HAP-1 (cell line): ENCODE measurements at regions of chr10 and their contacts with region 1.

Region 1: GRCh38 chr10:60208676-60209269 is 180.9 kb downstream of the ANK3 start:
- DNase-seq: peak in 1 of 2 experiments; percentile 54
- H3K4me3 ChIP-seq: no peak overlapping the region
- H3K4me1 ChIP-seq: no peaks in the 10 kb centered on the region
- H3K27me3 ChIP-seq: peaks cover 24% of the 10 kb centered on the region

Region 2: GRCh38 chr10:59970396-59971368 is 238.1 kb before region 1 on chr10:
- in situ Hi-C with region 1: no loop called
- DNase-seq: no peak
- H3K4me3 ChIP-seq: no peak overlapping the region
- H3K4me1 ChIP-seq: no peaks in the 10 kb centered on the region
- H3K27me3 ChIP-seq: no peaks in the 10 kb centered on the region

Region 3: GRCh38 chr10:60099998-60100747 is 108.6 kb before region 1 on chr10:
- in situ Hi-C with region 1: loop called (anchors 5 kb)
- DNase-seq: peak; percentile 42 to 64
- H3K4me3 ChIP-seq: no peak overlapping the region
- H3K4me1 ChIP-seq: peaks cover 22% of the 10 kb centered on the region
- H3K27me3 ChIP-seq: no peaks in the 10 kb centered on the region